ENCODE measurements at regions of chr1 and their contacts with region 1.

Region 1: GRCh38 chr1:247407180-247407616 is 8.8 kb upstream of the NLRP3 start:
- DNase-seq: peak; percentile 40 to 63 (median 53)
- ATAC-seq: peak; percentile 91
- H3K4me3 ChIP-seq: peak overlapping the region; percentile 30
- H3K4me3 Mint-ChIP-seq: peak overlapping the region; percentile 69 to 89 (median 78)
- H3K27ac ChIP-seq: peak overlapping the region; percentile 50
- H3K27ac Mint-ChIP-seq: peak overlapping the region; percentile 76 to 98 (median 92)
- H3K4me1 ChIP-seq: peaks cover 20 to 33% of the 10 kb centered on the region in 2 donors
- H3K4me1 Mint-ChIP-seq: peaks cover 25 to 42% (median 38%) of the 10 kb centered on the region in 7 donors
- H3K27me3 ChIP-seq: no peaks in the 10 kb centered on the region
- H3K27me3 Mint-ChIP-seq: peaks cover 0 to 46% (median 0%) of the 10 kb centered on the region in 5 donors

Region 2: DNA sequence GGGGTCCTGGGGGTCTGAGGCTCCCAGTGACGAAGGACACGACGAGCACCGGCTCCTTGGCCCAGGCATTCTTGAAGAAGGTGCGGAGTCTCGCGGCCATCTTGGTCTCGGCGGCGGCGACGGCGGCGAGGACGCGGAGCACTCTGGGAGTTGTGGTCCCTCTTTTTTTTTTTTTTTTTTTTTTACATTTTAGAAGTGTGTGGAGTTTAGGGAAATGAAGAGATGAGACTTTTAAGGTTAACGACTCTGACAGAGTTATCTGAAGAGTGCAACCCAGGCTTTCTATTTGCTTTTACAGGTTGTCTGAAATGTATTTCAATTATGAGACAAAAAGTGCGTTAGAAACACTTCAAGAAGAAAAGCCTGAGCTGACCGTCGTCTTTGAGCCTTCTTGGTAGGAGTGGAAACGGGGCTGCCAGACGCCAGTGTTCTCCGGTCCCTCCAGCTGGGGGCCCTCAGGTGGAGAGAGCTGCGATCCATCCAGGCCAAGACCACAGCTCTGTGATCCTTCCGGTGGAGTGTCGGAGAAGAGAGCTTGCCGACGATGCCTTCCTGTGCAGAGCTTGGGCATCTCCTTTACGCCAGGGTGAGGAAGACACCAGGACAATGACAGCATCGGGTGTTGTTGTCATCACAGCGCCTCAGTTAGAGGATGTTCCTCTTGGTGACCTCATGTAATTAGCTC is 41.1 kb after region 1 on chr1:
- CTCF ChIA-PET with region 1: no interaction called
- POLR2A ChIA-PET with region 1: no interaction called
- intact Hi-C with region 1: loop called in 1 of 2 experiments (anchors 2 kb)
- DNase-seq: peak in 5 of 9 donors; percentile 8 to 29 (median 12)
- ATAC-seq: peak; percentile 12
- H3K4me3 ChIP-seq: no peak overlapping the region
- H3K4me3 Mint-ChIP-seq: peak overlapping the region in 5 of 10 donors; percentile 23 to 68 (median 60)
- H3K27ac ChIP-seq: peak overlapping the region; percentile 50
- H3K27ac Mint-ChIP-seq: peak overlapping the region in 4 of 9 donors; percentile 60 to 72 (median 62)
- H3K4me1 ChIP-seq: no peaks in the 10 kb centered on the region
- H3K4me1 Mint-ChIP-seq: peaks cover 0 to 19% (median 8%) of the 10 kb centered on the region in 7 donors
- H3K27me3 ChIP-seq: no peaks in the 10 kb centered on the region
- H3K27me3 Mint-ChIP-seq: no peaks in the 10 kb centered on the region

Region 3: DNA sequence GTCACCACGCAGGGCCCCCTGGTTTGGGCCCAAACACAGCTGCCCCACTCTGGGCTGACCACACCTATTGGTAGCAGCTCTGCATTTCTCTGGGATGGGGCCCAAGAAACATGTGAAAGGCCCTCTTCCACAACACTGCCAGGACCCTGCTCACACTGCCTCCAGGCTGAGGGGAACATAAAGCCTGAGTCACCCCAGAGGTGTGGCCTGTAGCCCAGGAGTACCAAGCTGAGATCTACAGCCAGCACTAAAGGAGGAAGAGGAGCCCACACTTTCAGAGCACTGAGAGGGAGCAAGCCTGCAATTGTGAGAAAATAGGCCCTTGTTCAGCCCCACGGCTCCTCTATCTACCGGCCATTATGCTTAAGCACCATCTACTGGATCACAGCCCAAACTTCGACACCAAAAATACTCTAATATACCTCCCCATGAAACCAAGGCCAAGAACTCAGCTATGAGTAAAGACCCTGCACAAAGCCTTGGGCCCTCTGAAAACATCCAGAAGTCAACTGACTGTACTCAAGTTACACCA is 1204.8 kb after region 1 on chr1:
- CTCF ChIA-PET with region 1: no interaction called
- POLR2A ChIA-PET with region 1: no interaction called
- intact Hi-C with region 1: no loop called
- DNase-seq: peak in 4 of 9 donors; percentile 11 to 33 (median 20)
- ATAC-seq: no peak
- H3K4me3 ChIP-seq: no peak overlapping the region
- H3K4me3 Mint-ChIP-seq: no peak overlapping the region
- H3K27ac ChIP-seq: no peak overlapping the region
- H3K27ac Mint-ChIP-seq: peak overlapping the region in 3 of 9 donors; percentile 5 to 57 (median 25)
- H3K4me1 ChIP-seq: no peaks in the 10 kb centered on the region
- H3K4me1 Mint-ChIP-seq: peaks cover 0 to 31% (median 5%) of the 10 kb centered on the region in 7 donors
- H3K27me3 ChIP-seq: no peaks in the 10 kb centered on the region
- H3K27me3 Mint-ChIP-seq: no peaks in the 10 kb centered on the region

Measured in naive thymus-derived CD4-positive, alpha-beta T cell (primary cell).